Calu3 (cell line): ENCODE measurements at regions of chr4 and their contacts with region 1.

Region 1: DNA sequence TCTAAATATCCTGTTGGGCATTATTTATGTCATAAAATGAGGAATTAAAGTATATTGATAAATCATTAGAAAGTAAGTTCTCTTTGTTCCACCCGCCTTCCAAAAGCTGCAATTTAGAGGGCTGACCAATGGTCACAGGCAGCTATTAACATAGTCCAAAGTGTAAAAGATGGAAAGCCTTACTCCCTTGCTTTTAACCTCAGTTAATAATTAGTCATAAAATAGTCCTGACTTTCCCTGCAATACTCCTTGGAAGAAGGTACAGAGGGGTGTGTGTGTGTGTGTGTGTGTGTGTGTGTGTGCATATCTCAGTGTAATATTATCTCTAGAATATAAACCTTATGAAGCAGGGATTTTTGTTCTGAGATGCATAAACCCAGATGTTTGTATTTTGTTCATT is 275.4 kb downstream of the FAT4 start:
- DNase-seq: no peak
- H3K4me3 Mint-ChIP-seq: no peak overlapping the region
- H3K27ac Mint-ChIP-seq: no peak overlapping the region
- H3K4me1 Mint-ChIP-seq: no peaks in the 10 kb centered on the region
- H3K27me3 Mint-ChIP-seq: no peaks in the 10 kb centered on the region
- CTCF ChIP-seq: no peak

Region 2: GRCh38 chr4:125323654-125324053 is 266.5 kb before region 1 on chr4:
- CTCF ChIA-PET with region 1: no interaction called
- intact Hi-C with region 1: loop called (anchors 5 kb)
- DNase-seq: peak; percentile 28
- H3K4me3 Mint-ChIP-seq: peak overlapping the region; percentile 17
- H3K27ac Mint-ChIP-seq: no peak overlapping the region
- H3K4me1 Mint-ChIP-seq: peaks cover 9% of the 10 kb centered on the region
- H3K27me3 Mint-ChIP-seq: no peaks in the 10 kb centered on the region
- CTCF ChIP-seq: no peak

Region 3: GRCh38 chr4:125389713-125390112 is 200.4 kb before region 1 on chr4:
- CTCF ChIA-PET with region 1: no interaction called
- intact Hi-C with region 1: no loop called
- DNase-seq: no peak
- H3K4me3 Mint-ChIP-seq: no peak overlapping the region
- H3K27ac Mint-ChIP-seq: peak overlapping the region; percentile 52
- H3K4me1 Mint-ChIP-seq: peaks cover 14% of the 10 kb centered on the region
- H3K27me3 Mint-ChIP-seq: no peaks in the 10 kb centered on the region
- CTCF ChIP-seq: no peak